Dorsolateral prefrontal cortex (tissue), 120 donors: ENCODE measurements at regions of chr6 and their contacts with region 1.

Region 1: DNA sequence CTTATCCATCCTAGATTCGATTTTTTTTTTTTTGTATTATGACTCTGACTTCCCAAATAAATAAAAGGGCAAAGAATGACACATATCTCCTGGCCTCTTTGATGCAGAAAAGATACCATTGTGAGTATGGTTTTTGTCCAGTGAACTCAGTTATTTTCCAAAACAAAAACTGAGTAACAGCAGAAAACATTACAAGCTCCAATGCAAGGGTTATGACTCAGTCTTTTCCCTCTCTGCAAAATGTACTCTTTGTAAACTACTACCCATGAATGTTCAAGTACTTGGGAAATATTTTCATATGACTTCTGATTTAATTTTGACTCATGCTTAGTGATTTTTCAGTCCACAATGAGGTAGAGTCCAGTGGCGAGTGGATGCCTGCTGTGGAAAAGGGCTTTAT is 355.3 kb downstream of the RNF144B start:
- DNase-seq: no peak
- H3K4me3 ChIP-seq: no peak overlapping the region
- H3K27ac ChIP-seq: no peak overlapping the region
- H3K27me3 ChIP-seq: peaks cover 0 to 9% (median 0%) of the 10 kb centered on the region in 45 donors
- CTCF ChIP-seq: no peak

Region 2: DNA sequence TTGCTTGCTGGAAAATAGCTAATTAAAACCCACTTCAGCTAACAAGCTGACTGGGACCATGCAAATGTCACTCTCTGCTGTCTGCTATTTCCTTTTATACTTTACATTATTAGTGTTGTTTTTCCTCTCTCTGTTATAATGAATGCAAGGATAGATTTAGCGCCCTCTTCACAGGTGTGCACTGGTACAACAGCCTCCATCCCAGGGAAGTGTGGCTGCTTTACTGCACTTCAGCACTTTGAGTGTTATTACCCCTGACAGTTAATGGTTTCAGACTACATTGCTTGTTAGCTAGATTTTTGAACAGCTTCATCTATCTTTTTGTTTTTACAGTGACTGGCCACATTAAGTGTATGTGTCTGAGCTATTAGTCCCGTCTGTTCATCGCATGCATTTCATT is 50.5 kb after region 1 on chr6:
- intact Hi-C with region 1: loop called in 1 of 2 experiments (anchors 2 kb)
- DNase-seq: no peak
- H3K4me3 ChIP-seq: no peak overlapping the region
- H3K27ac ChIP-seq: no peak overlapping the region
- H3K27me3 ChIP-seq: peaks cover 0 to 2% (median 0%) of the 10 kb centered on the region in 45 donors
- CTCF ChIP-seq: no peak